ENCODE measurements at regions of chr3 and their contacts with region 1.

Region 1: DNA sequence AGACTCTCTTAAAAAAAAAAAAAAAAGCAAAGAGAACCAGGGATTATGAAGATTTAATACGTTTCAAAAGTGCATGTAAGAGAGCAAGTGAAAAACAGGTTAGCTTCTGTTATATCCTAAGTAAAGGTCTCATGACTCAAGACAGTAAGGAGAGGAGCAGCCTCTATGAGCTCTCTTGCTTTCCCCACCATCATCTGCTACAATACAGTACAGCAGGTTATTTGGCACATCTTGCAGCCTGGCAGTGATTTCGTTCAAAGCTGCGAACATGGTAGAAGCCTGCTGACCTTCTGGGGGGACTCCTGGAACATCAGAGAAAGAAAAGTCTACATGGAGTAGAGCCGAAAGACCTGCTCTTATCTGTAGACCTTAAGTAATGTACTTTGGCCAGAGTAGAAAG is 129.2 kb upstream of the PLXND1 start:
- DNase-seq: no peak
- ATAC-seq: peak in 3 of 4 donors; percentile 56 to 66 (median 63)
- H3K4me3 ChIP-seq: no peak overlapping the region
- H3K27ac ChIP-seq: no peak overlapping the region
- H3K4me1 ChIP-seq: peaks cover 20% of the 10 kb centered on the region
- H3K27me3 ChIP-seq: no peaks in the 10 kb centered on the region
- CTCF ChIP-seq: no peak

Region 2: DNA sequence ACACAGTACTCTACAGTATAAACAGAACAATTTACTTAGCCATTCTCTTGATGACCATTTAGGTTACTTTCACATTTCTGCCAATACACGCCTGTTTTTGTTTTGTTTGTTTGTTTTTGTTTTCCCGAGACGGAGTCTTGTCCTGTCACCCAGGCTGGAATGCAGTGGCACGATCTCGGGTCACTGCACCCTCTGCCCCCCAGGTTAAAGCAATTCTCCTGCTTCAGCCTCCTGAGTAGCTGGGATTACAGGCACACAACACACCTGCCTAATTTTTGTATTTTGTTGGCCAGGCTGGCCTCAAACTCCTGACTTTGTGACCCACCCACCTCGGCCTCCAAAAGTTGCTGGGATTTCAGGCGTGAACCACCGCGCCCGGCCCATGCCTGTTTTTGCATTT is 65.7 kb after region 1 on chr3:
- intact Hi-C with region 1: loop called in 1 of 2 experiments (anchors 5 kb)
- DNase-seq: no peak
- ATAC-seq: no peak
- H3K4me3 ChIP-seq: no peak overlapping the region
- H3K27ac ChIP-seq: no peak overlapping the region
- H3K4me1 ChIP-seq: peaks cover 5% of the 10 kb centered on the region
- H3K27me3 ChIP-seq: no peaks in the 10 kb centered on the region
- CTCF ChIP-seq: no peak

Region 3: GRCh38 chr3:129992781-129993180 is 257.1 kb after region 1 on chr3:
- intact Hi-C with region 1: no loop called
- DNase-seq: no peak
- ATAC-seq: no peak
- H3K4me3 ChIP-seq: no peak overlapping the region
- H3K27ac ChIP-seq: no peak overlapping the region
- H3K4me1 ChIP-seq: no peaks in the 10 kb centered on the region
- H3K27me3 ChIP-seq: no peaks in the 10 kb centered on the region
- CTCF ChIP-seq: no peak

Region 4: GRCh38 chr3:131326307-131326706 is 1590.7 kb after region 1 on chr3:
- intact Hi-C with region 1: no loop called
- DNase-seq: no peak
- ATAC-seq: no peak
- H3K4me3 ChIP-seq: no peak overlapping the region
- H3K27ac ChIP-seq: no peak overlapping the region
- H3K4me1 ChIP-seq: no peaks in the 10 kb centered on the region
- H3K27me3 ChIP-seq: no peaks in the 10 kb centered on the region
- CTCF ChIP-seq: no peak

Measured in psoas muscle (tissue), 8 donors.